ENCODE measurements at regions of chr12 and their contacts with region 1.

Region 1: DNA sequence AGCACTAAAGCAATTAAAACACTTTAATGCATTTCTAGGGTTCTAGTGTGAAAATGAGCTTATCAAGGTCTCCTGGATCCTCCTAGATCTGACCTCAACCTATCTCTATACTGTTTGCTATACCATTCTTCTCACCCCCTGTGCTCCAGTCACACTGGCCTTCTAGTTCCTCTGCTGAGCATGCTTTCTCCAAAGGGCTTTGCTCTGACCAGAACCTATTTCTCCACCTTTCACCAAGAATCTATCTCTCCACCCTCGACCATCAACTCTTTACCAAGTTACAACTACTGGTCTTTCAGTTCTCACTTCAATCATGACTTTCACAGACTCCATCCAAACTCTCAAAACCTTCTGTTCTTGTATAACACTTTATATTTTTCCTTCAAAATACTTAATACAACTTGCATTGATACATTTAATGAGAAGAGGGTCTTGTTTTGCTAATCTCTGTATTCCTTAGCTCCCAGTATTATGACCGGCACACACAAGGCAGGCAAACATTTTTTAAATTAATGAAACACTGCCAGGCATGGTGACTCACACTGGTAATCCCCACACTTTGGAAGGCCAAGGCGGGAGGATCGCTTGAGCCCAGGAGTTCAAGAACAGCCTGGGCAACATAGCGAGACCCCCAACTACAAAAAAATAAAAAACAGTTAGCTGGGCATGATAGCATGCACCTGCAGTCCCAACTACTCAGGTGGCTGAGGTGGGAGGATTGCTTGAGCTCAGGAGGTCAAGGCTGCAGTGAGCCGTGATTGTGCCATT is 22.8 kb downstream of the PPP1R12A start:
- DNase-seq: no peak
- ATAC-seq: no peak
- H3K4me3 ChIP-seq: no peak overlapping the region
- H3K4me3 Mint-ChIP-seq: no peak overlapping the region
- H3K27ac ChIP-seq: no peak overlapping the region
- H3K27ac Mint-ChIP-seq: peak overlapping the region; percentile 6
- H3K4me1 ChIP-seq: peaks cover 38% of the 10 kb centered on the region
- H3K4me1 Mint-ChIP-seq: peaks cover 78% of the 10 kb centered on the region
- H3K27me3 ChIP-seq: no peaks in the 10 kb centered on the region
- H3K27me3 Mint-ChIP-seq: no peaks in the 10 kb centered on the region
- CTCF ChIP-seq: no peak

Region 2: DNA sequence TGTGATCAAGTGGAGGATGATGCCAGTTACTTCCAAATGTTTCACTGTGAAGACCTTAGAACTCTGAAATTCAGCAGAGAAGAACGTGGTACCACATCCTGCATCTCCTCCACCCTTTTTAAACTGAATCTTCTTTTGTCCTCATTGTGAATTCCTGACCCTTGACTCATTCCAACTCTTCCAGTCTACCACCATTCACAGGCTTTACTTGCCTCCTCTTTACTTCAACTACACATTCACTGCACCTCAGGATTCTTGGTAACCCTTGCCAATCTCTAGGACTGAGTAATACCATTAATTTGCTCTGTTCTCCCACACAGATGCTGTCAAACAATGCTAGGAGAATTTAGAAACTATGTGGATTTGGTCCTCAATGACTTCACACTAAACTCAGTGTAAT is 14.5 kb before region 1 on chr12:
- CTCF ChIA-PET with region 1: no interaction called
- POLR2A ChIA-PET with region 1: interaction called, 3 read pairs
- intact Hi-C with region 1: loop called in 1 of 2 experiments (anchors 2 kb)
- DNase-seq: no peak
- ATAC-seq: no peak
- H3K4me3 ChIP-seq: no peak overlapping the region
- H3K4me3 Mint-ChIP-seq: no peak overlapping the region
- H3K27ac ChIP-seq: no peak overlapping the region
- H3K27ac Mint-ChIP-seq: peak overlapping the region; percentile 6
- H3K4me1 ChIP-seq: peaks cover 17% of the 10 kb centered on the region
- H3K4me1 Mint-ChIP-seq: peaks cover 81% of the 10 kb centered on the region
- H3K27me3 ChIP-seq: no peaks in the 10 kb centered on the region
- H3K27me3 Mint-ChIP-seq: no peaks in the 10 kb centered on the region
- CTCF ChIP-seq: no peak

Region 3: GRCh38 chr12:79945433-79945832 is 33.4 kb after region 1 on chr12:
- CTCF ChIA-PET with region 1: no interaction called
- POLR2A ChIA-PET with region 1: no interaction called
- intact Hi-C with region 1: loop called in 1 of 2 experiments (anchors 5 kb)
- DNase-seq: no peak
- ATAC-seq: no peak
- H3K4me3 ChIP-seq: no peak overlapping the region
- H3K4me3 Mint-ChIP-seq: no peak overlapping the region
- H3K27ac ChIP-seq: no peak overlapping the region
- H3K27ac Mint-ChIP-seq: no peak overlapping the region
- H3K4me1 ChIP-seq: no peaks in the 10 kb centered on the region
- H3K4me1 Mint-ChIP-seq: no peaks in the 10 kb centered on the region
- H3K27me3 ChIP-seq: no peaks in the 10 kb centered on the region
- H3K27me3 Mint-ChIP-seq: peaks cover 2% of the 10 kb centered on the region
- CTCF ChIP-seq: no peak

Region 4: GRCh38 chr12:80033448-80033847 is 121.4 kb after region 1 on chr12:
- CTCF ChIA-PET with region 1: no interaction called
- POLR2A ChIA-PET with region 1: no interaction called
- intact Hi-C with region 1: no loop called
- DNase-seq: no peak
- ATAC-seq: no peak
- H3K4me3 ChIP-seq: no peak overlapping the region
- H3K4me3 Mint-ChIP-seq: no peak overlapping the region
- H3K27ac ChIP-seq: no peak overlapping the region
- H3K27ac Mint-ChIP-seq: no peak overlapping the region
- H3K4me1 ChIP-seq: no peaks in the 10 kb centered on the region
- H3K4me1 Mint-ChIP-seq: no peaks in the 10 kb centered on the region
- H3K27me3 ChIP-seq: no peaks in the 10 kb centered on the region
- H3K27me3 Mint-ChIP-seq: peaks cover 5% of the 10 kb centered on the region
- CTCF ChIP-seq: no peak

Measured in CD8-positive, alpha-beta T cell (primary cell).